ENCODE measurements at regions of chr2 and their contacts with region 1.

Region 1: DNA sequence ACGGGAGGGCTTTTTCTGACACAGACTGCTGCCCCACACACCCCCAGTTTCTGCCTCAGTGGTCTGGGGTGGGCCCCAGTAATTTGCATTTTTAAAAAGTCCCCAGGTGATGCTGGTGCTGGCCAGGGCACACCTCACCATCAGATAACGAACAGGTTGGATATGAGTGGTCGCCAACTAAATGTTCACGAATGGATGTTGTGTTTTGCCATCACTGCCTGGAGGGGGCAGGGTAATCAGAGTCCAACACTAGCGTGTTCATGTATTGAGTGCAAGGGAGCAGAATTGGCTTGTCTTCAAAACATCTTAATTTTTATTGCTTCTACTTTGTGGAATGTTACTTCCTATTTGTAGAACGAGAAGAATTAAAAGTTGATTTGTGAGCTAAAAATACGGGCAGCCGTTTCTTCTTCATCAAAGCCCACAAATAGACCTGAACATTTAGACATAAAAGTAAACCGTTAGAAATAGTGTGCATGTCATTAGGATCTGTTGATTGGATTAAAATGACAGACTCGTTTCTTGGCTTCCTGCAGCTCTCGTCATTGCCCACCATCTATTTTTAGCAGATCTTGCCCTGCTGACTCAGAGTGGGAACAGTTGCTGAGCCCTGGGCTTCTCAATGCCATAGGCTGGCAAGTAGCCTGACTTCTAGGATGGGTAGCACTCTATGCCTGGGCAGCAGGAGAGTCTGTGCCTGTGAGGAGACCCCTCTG is 45.2 kb downstream of the NCK2 start:
- DNase-seq: peak; percentile 92
- ATAC-seq: peak; percentile 87
- H3K4me3 Mint-ChIP-seq: peak overlapping the region; percentile 68
- H3K27ac Mint-ChIP-seq: peak overlapping the region; percentile 100
- H3K4me1 Mint-ChIP-seq: peaks cover 94% of the 10 kb centered on the region
- H3K27me3 Mint-ChIP-seq: no peaks in the 10 kb centered on the region

Region 2: GRCh38 chr2:105576440-105577252 is 213.3 kb before region 1 on chr2:
- CTCF ChIA-PET with region 1: interaction called, 13 read pairs
- DNase-seq: no peak
- ATAC-seq: no peak
- H3K4me3 Mint-ChIP-seq: no peak overlapping the region
- H3K27ac Mint-ChIP-seq: peak overlapping the region; percentile 37
- H3K4me1 Mint-ChIP-seq: peaks cover 25% of the 10 kb centered on the region
- H3K27me3 Mint-ChIP-seq: no peaks in the 10 kb centered on the region

Region 3: GRCh38 chr2:105744909-105745853 is 44.7 kb before region 1 on chr2 and contains the start of gene NCK2:
- CTCF ChIA-PET with region 1: interaction called, 17 read pairs
- DNase-seq: no peak
- ATAC-seq: peak; percentile 12
- H3K4me3 Mint-ChIP-seq: peak within 1 kb of the TSS; percentile 92
- H3K27ac Mint-ChIP-seq: peak within 1 kb of the TSS; percentile 97
- H3K4me1 Mint-ChIP-seq: peaks cover 59% of the 10 kb centered on the region
- H3K27me3 Mint-ChIP-seq: no peaks in the 10 kb centered on the region
- total RNA-seq, gene NCK2: 51.6 to 54.1 TPM

Region 4: GRCh38 chr2:105775809-105776559 is 13.9 kb before region 1 on chr2:
- CTCF ChIA-PET with region 1: interaction called, 35 read pairs
- DNase-seq: peak; percentile 65
- ATAC-seq: peak; percentile 72
- H3K4me3 Mint-ChIP-seq: peak overlapping the region; percentile 59
- H3K27ac Mint-ChIP-seq: peak overlapping the region; percentile 81
- H3K4me1 Mint-ChIP-seq: peaks cover 81% of the 10 kb centered on the region
- H3K27me3 Mint-ChIP-seq: no peaks in the 10 kb centered on the region

Region 5: DNA sequence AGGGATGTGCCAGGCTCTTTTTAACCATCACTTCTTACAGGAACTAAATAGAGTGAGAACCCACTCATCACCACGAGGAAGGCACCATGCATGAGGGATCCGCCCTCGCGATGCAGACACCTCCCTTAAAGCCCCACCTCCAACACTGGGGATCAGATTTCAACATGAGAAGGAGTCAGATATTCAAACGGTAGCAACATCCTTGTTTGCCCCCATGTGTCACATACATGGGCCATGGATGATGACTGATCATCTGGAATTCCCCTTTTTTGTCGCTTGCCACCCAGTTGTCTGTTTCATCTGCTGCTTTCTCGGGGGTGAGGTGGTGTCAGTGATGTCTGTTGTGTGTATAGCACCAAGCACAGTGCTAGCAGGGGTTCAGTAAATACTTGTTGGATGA is 12.7 kb after region 1 on chr2:
- CTCF ChIA-PET with region 1: interaction called, 19 read pairs
- DNase-seq: peak; percentile 72
- ATAC-seq: peak; percentile 59
- H3K4me3 Mint-ChIP-seq: peak overlapping the region; percentile 3
- H3K27ac Mint-ChIP-seq: peak overlapping the region; percentile 82
- H3K4me1 Mint-ChIP-seq: peaks cover 89% of the 10 kb centered on the region
- H3K27me3 Mint-ChIP-seq: no peaks in the 10 kb centered on the region

Region 6: GRCh38 chr2:105858868-105859693 is 69.2 kb after region 1 on chr2:
- CTCF ChIA-PET with region 1: interaction called, 17 read pairs
- DNase-seq: peak; percentile 42
- ATAC-seq: peak; percentile 62
- H3K4me3 Mint-ChIP-seq: peak overlapping the region; percentile 26
- H3K27ac Mint-ChIP-seq: peak overlapping the region; percentile 88
- H3K4me1 Mint-ChIP-seq: peaks cover 86% of the 10 kb centered on the region
- H3K27me3 Mint-ChIP-seq: no peaks in the 10 kb centered on the region

Region 7: DNA sequence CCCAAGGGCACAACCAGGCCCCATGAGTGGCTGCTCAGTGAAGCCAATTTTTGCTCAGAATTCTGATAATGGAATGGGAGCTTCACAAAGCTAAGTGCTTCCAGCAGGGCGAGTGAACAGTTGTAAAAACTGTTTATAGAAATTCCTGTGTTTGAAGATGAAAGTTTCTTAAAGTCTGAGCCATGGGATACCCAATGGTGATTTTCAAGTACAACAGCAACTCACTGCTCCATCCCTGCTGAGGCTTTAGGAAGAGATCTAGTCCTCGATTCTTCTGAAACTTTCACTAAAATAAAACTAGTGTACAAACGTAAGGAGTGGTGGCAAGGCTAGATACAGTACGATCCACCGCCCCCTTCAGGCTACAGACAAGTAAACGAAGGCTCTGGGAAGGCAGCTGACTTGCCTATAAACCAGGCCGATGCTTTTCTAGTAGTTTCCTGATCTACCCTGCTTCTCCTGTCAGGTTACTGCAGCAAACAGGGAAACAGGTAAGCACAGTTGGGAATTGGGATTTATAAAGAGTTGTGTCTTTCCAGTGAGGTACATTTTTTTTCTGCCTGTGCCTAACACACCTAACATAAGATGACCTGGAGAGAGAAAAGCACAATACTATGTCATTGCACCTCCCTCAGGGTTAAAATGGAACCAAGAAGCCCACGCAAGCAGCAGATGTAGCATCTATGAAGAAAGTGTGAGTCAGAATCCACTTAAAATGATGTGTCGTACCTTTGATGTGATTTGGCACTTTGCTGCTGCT is 295.5 kb after region 1 on chr2:
- CTCF ChIA-PET with region 1: interaction called, 22 read pairs
- DNase-seq: peak; percentile 79
- ATAC-seq: peak; percentile 96
- H3K4me3 Mint-ChIP-seq: peak overlapping the region; percentile 14
- H3K27ac Mint-ChIP-seq: peak overlapping the region; percentile 65
- H3K4me1 Mint-ChIP-seq: peaks cover 33% of the 10 kb centered on the region
- H3K27me3 Mint-ChIP-seq: no peaks in the 10 kb centered on the region